Activated CD4-positive, alpha-beta T cell treated with anti-CD3 and anti-CD28 coated beads for 36 hours (primary cell): ENCODE measurements at regions of chr6 and their contacts with region 1.

Region 1: DNA sequence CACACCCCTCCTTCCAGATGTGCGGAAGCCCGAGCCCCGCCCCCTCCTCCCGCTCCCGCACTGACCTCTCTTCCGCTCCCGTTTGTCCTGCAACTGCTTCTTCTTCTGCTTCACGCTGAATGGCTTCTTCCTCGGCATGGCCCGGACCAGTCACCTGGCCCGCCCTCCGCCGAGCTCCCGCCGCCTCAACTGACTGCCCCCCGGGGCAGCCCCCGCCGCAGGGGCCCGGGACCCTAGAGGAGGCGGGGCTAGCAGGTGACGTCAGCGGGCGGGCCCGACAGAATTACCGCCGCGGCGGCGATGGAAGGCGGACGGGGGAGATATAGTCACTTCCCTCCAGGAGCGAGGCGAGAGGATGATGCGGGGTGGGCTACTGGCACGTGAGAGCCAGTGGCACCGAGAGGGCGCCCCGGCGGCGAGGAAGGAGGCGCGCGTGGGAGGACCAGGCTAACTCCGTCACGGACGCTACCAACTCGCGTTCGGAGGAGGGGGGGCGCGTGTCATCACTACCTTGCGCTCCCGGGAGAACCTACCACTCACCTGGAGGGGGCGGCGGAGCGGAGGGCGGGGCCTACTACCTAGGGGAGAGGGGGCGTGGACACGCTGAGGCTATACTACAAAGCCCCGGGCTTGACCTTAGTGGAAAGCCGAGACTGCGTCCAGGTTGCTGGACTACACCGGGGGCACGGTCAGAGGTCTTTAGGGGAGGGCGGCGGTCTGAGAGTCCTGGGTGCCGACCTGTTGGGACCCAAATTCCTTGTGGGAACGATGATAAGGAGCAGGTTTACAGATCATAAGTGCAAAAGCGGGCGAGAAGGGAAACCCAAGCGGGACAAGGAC is at the start of gene GNL1:
- DNase-seq: peak; percentile 100
- ATAC-seq: peak; percentile 89
- H3K4me3 Mint-ChIP-seq: peak within 1 kb of the TSS; percentile 97
- H3K27ac Mint-ChIP-seq: peak within 1 kb of the TSS; percentile 100
- H3K4me1 Mint-ChIP-seq: peaks cover 34% of the 10 kb centered on the region
- H3K27me3 Mint-ChIP-seq: no peaks in the 10 kb centered on the region
- total RNA-seq, gene GNL1: 91.3 to 104 TPM

Region 2: GRCh38 chr6:30066577-30067459 is 489.5 kb before region 1 on chr6 and contains the start of gene PPP1R11:
- CTCF ChIA-PET with region 1: no interaction called
- POLR2A ChIA-PET with region 1: no interaction called
- intact Hi-C with region 1: loop called in 1 of 2 experiments (anchors 1 kb)
- DNase-seq: peak; percentile 99
- ATAC-seq: peak; percentile 98
- H3K4me3 Mint-ChIP-seq: peak within 1 kb of the TSS; percentile 86
- H3K27ac Mint-ChIP-seq: peak within 1 kb of the TSS; percentile 97
- H3K4me1 Mint-ChIP-seq: peaks cover 53% of the 10 kb centered on the region
- H3K27me3 Mint-ChIP-seq: peaks cover 7% of the 10 kb centered on the region
- total RNA-seq, gene PPP1R11: 47.8 to 59.9 TPM

Region 3: DNA sequence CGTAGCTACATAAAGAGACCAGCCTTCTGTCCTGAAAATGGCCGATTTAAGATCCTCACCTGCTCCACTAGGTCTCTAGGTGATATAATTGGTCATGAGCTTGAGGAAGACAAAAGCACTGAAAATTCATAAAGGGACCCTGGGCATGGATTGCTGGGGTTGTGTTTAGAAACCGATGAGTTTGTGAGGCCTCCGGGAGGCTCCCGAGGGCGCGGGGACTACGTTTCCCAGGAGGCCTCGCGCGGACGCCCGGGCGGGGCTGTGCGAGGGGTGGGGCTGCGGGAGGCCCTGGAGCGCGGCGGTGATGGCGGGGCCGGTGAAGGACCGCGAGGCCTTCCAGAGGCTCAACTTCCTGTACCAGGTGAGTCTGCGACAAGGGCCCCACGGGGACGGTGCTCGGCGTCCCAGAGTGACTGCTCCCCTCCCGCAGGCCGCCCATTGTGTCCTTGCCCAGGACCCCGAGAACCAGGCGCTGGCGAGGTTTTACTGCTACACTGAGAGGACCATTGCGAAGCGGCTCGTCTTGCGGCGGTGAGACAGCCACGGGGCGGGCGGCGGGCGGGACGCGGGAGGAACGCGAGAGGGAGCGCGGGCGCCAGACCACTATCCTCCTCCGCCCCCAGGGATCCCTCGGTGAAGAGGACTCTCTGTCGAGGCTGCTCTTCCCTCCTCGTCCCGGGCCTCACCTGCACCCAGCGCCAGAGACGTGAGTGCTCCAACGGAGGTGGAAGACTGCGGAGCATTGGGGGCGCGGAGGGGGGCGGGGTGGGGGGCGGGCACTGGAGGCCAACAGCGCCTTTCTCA is 211.2 kb before region 1 on chr6 and contains the start of gene RPP21:
- CTCF ChIA-PET with region 1: no interaction called
- POLR2A ChIA-PET with region 1: no interaction called
- intact Hi-C with region 1: loop called in 1 of 2 experiments (anchors 2 kb)
- DNase-seq: peak; percentile 94
- ATAC-seq: peak; percentile 96
- H3K4me3 Mint-ChIP-seq: peak within 1 kb of the TSS; percentile 85
- H3K27ac Mint-ChIP-seq: peak within 1 kb of the TSS; percentile 84
- H3K4me1 Mint-ChIP-seq: peaks cover 41% of the 10 kb centered on the region
- H3K27me3 Mint-ChIP-seq: peaks cover 2% of the 10 kb centered on the region
- total RNA-seq, gene RPP21: 32.6 to 38.1 TPM

Region 4: GRCh38 chr6:30533460-30534294 is 22.6 kb before region 1 on chr6:
- CTCF ChIA-PET with region 1: interaction called, 7 read pairs
- POLR2A ChIA-PET with region 1: interaction called, 3 read pairs
- intact Hi-C with region 1: loop called in 1 of 2 experiments (anchors 1 kb)
- DNase-seq: no peak
- ATAC-seq: no peak
- H3K4me3 Mint-ChIP-seq: peak overlapping the region; percentile 63
- H3K27ac Mint-ChIP-seq: peak overlapping the region; percentile 92
- H3K4me1 Mint-ChIP-seq: peaks cover 58% of the 10 kb centered on the region
- H3K27me3 Mint-ChIP-seq: no peaks in the 10 kb centered on the region

Region 5: GRCh38 chr6:30646458-30647241 is 90.4 kb after region 1 on chr6 and contains the start of gene C6orf136:
- CTCF ChIA-PET with region 1: no interaction called
- POLR2A ChIA-PET with region 1: no interaction called
- intact Hi-C with region 1: loop called in 1 of 2 experiments (anchors 1 kb)
- DNase-seq: peak; percentile 97
- ATAC-seq: peak; percentile 86
- H3K4me3 Mint-ChIP-seq: peak within 1 kb of the TSS; percentile 78
- H3K27ac Mint-ChIP-seq: peak within 1 kb of the TSS; percentile 88
- H3K4me1 Mint-ChIP-seq: peaks cover 20% of the 10 kb centered on the region
- H3K27me3 Mint-ChIP-seq: no peaks in the 10 kb centered on the region
- total RNA-seq, gene C6orf136: 26.5 to 30.8 TPM

Region 6: DNA sequence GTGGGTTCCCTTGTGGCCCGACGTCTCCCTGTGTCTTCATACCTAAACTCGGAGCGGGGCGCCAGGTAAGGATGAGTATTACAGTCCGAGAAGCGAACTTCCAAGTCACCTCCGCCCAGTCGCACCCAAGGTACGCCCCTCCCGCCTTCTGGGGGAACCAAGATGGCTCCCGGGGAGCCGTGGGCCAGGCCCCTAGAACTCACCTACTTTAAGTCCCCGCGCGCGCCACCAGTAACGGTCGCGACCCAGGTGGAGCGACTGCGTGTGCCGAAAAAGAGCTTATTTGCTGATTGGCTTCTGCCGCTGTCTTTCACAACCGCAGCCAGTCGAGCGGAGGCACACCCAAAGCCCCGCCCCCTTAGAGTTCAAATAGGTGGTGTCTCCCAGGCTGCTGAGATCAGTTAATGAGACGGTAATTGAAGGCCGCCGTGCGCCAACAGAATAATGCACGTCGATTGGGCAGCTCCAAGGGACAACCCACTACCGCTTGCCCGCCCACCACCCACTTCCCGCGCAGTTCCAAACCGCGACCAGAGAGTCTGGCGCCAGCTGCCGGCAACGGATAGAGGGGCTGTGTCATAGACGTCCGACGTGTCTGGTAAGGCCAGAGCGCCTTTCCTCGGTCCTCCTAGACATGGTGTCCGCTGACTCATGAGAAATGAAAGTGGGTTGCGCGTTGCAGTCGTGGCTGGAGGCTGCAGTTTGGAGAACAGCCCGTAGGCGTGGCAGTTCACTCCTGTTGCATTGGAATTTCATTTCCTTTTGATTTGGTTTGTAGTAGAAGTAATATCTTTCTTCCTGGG is 161.0 kb after region 1 on chr6 and contains the start of gene MDC1:
- CTCF ChIA-PET with region 1: no interaction called
- POLR2A ChIA-PET with region 1: interaction called, 3 read pairs
- intact Hi-C with region 1: loop called (anchors 1 kb)
- DNase-seq: peak; percentile 100
- ATAC-seq: peak; percentile 78
- H3K4me3 Mint-ChIP-seq: peak within 1 kb of the TSS; percentile 98
- H3K27ac Mint-ChIP-seq: peak within 1 kb of the TSS; percentile 99
- H3K4me1 Mint-ChIP-seq: peaks cover 43% of the 10 kb centered on the region
- H3K27me3 Mint-ChIP-seq: no peaks in the 10 kb centered on the region
- total RNA-seq, gene MDC1: 92.0 to 101 TPM

Region 7: DNA sequence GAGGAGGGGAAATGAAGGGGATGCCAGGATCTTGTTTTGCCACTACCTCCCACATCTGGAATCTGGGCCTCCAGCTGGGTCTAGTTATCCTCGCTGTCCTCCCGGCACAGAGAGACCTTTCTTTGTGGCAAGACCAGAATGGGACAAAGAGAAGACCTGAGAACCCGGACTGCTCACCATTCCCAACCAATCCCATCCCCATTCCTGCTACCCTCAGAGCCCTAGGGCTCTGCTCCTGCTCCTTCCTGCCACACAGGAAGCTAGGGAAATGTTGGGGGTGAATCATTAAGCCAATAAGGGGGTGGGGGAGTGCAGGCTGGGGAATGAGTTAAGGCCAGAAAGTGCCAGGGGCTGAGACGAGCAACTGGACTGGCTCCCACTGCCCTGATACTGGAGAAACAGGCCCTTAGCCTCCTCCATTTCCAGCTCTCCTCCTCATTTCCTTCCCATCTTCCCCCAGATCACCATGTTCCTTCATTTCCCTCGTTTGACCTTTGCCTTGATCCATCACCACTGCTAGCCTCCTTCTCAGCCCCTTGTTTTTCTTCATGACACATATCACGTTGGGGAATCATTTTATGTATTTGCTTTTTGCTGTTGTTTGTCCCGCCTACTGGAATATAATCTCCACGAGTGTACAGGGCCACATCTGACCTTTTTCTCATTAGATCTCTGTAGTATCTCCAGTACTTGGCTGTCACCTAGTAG is 192.7 kb after region 1 on chr6:
- CTCF ChIA-PET with region 1: no interaction called
- POLR2A ChIA-PET with region 1: no interaction called
- intact Hi-C with region 1: no loop called
- DNase-seq: no peak
- ATAC-seq: no peak
- H3K4me3 Mint-ChIP-seq: no peak overlapping the region
- H3K27ac Mint-ChIP-seq: no peak overlapping the region
- H3K4me1 Mint-ChIP-seq: peaks cover 40% of the 10 kb centered on the region
- H3K27me3 Mint-ChIP-seq: no peaks in the 10 kb centered on the region

Region 8: DNA sequence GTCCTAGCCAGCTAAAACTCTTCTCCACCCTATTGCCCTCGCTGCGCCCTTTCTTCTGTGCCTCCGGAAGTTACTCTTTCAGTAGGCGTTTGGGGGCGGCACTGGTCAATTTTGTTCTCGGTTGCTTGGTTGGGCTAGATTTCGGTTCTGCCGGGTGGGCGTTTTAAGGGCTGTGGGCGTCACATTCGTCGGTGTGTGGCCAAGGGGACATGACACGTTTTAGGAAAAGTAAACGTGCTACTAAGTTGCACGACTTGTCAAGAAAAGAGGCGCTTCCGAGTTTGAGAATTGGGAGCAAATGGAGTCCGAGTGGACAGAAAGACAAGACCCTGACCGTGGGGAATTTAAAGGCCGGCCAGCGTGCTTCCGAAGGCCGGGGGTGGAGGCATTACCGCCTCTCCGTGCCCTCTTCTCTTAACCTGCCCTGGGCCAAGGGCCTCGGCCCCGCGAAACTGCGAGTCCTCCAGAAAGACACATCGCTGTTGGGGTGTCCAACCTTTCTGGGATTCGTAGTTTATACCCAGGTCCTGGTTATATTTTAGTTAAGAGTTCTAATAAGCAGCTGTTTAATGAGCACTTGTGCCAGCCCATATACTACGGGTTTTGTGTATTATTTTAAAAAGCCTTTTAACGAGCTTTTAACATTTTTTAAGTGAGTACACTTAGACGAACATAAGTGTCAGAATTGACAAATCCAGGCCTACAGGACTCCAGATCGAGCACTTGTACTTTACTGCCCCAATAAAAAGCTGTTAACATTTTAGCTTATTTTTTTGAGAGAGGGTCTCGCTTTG is 1096.8 kb after region 1 on chr6:
- CTCF ChIA-PET with region 1: no interaction called
- POLR2A ChIA-PET with region 1: no interaction called
- intact Hi-C with region 1: loop called in 1 of 2 experiments (anchors 2 kb)
- DNase-seq: peak; percentile 91
- ATAC-seq: peak; percentile 71
- H3K4me3 Mint-ChIP-seq: peak overlapping the region; percentile 88
- H3K27ac Mint-ChIP-seq: peak overlapping the region; percentile 96
- H3K4me1 Mint-ChIP-seq: peaks cover 38% of the 10 kb centered on the region
- H3K27me3 Mint-ChIP-seq: no peaks in the 10 kb centered on the region